Motor neuron (in vitro differentiated cells): ENCODE measurements at regions of chr9 and their contacts with region 1.

Region 1: GRCh38 chr9:69174616-69175463 is 763 bp downstream of the TJP2 start:
- ATAC-seq: peak; percentile 32 to 71 (median 50)
- H3K4me3 ChIP-seq: peak overlapping the region; percentile 46 to 72 (median 54)
- H3K27ac ChIP-seq: no peak overlapping the region
- H3K4me1 ChIP-seq: peaks cover 5 to 9% of the 10 kb centered on the region in 2 donors

Region 2: DNA sequence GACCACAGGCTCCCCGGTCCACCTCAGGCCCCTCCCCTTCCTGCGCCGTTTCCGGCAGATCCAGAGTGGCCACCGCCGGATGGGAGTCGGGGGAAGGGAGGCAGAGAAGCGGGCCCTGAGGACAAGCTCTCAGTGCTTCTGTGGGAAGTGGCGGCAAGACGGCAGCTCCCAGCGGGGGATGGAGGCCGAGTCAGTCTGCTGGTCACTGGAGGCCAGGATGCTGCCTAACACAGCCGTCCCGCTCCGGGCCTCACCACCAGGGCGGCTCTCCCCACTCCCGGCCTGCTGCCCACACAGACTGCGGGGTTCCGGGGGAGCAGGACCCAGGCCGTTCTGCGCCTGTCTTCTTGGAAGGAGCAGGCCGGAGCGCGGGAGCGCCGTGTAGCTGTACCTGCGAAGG is 107.9 kb before region 1 on chr9:
- in situ Hi-C with region 1: loop called in 3 of 9 experiments (anchors 25 kb)
- ATAC-seq: no peak
- H3K4me3 ChIP-seq: no peak overlapping the region
- H3K27ac ChIP-seq: no peak overlapping the region
- H3K4me1 ChIP-seq: no peaks in the 10 kb centered on the region

Region 3: GRCh38 chr9:69085569-69086283 is 89.1 kb before region 1 on chr9:
- in situ Hi-C with region 1: loop called in 1 of 9 experiments (anchors 25 kb)
- ATAC-seq: peak in 3 of 8 experiments; percentile 89 to 94 (median 90)
- H3K4me3 ChIP-seq: no peak overlapping the region
- H3K27ac ChIP-seq: no peak overlapping the region
- H3K4me1 ChIP-seq: peaks cover 0 to 8% of the 10 kb centered on the region in 2 donors

Region 4: DNA sequence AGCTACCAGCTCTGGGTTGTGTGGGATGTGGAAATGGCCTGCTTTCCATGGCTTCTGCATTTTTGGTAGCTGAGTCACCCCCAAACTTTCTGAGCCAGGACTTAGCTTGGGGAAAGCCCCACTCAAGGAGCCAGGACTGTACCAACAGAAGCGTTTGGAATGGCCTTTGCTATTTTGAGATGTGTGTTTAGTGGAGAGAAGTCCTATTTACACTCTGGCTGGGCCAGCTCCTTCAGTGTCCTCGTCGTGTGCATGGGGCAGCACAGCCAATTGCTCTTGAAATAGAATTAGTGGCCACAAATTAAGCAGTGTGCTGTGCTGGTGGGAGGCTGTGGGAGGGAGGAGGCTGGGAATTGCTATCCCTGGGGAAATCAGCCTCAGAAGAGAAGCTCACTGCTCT is 201.8 kb after region 1 on chr9:
- in situ Hi-C with region 1: no loop called
- ATAC-seq: peak in 5 of 8 experiments; percentile 47 to 76 (median 67)
- H3K4me3 ChIP-seq: no peak overlapping the region
- H3K27ac ChIP-seq: no peak overlapping the region
- H3K4me1 ChIP-seq: peaks cover 10% of the 10 kb centered on the region in 2 donors